ENCODE measurements at regions of chrX and their contacts with region 1.

Region 1: DNA sequence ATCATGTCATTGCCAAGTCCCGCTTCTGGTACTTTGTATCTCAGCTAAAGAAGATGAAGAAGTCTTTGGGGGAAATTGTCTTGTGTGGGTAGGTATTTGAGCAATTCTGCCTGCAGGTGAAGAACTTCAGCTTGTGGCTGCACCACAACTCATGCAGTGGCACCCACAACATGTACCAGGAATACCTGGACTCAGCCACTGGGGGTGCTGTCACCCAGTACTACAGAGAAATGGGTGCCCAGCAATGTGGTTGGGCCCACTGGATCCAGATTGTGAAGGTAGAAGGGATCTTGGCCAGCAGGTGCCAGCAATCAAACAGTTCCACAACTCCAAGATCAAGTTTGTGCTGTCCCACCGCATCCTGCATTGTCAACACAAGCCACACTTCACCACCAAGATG is 238.0 kb downstream of the IL1RAPL2 start:
- DNase-seq: no peak
- ATAC-seq: no peak
- H3K4me3 ChIP-seq: no peak overlapping the region
- H3K27ac ChIP-seq: no peak overlapping the region
- H3K4me1 ChIP-seq: no peaks in the 10 kb centered on the region
- H3K27me3 ChIP-seq: peaks cover 0 to 25% (median 0%) of the 10 kb centered on the region in 7 donors
- CTCF ChIP-seq: no peak

Region 2: DNA sequence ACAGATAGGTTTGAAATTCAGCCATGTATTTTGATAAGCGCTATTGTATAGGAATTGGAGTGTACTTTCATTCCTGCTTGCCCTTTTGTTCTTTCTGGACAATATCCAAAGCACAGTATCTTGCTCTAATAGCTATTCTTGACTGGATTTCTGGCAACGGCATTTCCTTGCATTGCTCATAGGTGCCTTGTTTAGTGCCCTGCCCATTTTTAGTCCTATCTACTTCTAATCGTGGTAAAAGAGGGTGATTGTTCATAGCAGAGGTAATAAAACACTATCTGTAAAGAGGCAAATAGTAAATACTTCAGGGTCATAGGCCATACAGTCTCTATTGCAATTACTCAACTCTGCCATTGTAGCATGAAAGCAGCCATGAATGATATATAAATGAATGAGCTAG is 82.2 kb before region 1 on chrX:
- intact Hi-C with region 1: no loop called
- DNase-seq: no peak
- ATAC-seq: no peak
- H3K4me3 ChIP-seq: no peak overlapping the region
- H3K27ac ChIP-seq: no peak overlapping the region
- H3K4me1 ChIP-seq: no peaks in the 10 kb centered on the region
- H3K27me3 ChIP-seq: no peaks in the 10 kb centered on the region
- CTCF ChIP-seq: no peak

Region 3: DNA sequence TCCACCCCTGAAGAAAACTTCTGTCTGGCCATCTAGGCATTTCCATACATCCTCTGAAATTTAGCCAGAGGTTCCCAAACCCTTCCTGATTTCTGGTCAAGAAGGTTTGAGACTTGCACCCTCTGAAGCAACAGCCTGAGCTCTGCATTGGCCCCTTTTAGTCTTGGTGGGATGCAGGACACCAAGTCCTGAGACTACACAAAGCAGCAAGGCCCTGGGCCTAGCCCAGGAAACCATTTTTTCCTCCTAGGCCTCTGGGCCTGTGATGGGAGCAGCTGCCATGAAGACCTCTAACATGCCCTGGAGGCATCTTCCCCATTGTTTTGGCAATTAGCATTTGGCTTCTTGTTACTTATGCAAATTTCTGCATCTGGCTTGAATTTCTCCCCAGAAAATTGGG is 41.4 kb before region 1 on chrX:
- intact Hi-C with region 1: no loop called
- DNase-seq: no peak
- ATAC-seq: no peak
- H3K4me3 ChIP-seq: no peak overlapping the region
- H3K27ac ChIP-seq: no peak overlapping the region
- H3K4me1 ChIP-seq: no peaks in the 10 kb centered on the region
- H3K27me3 ChIP-seq: peaks cover 0 to 5% (median 0%) of the 10 kb centered on the region in 7 donors
- CTCF ChIP-seq: no peak

Region 4: DNA sequence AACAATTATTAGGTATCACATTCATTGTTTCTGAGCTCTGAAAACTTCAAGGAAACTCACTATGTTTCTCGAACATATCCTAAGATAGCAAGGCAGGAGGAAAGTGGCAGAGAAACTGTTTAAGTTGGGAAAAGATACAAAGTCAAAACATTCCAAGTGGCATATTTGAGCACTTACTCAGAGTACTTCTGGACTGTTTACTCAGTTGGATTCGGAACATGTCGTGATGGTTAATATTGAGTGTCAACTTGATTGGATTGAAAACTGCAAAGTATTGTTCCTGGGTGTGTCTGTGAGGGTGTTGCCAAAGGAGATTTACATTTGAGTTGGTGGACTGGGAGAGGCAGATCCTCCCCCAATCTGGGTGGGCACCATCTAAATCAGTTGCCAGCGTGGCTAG is 60.3 kb after region 1 on chrX:
- intact Hi-C with region 1: loop called in 1 of 10 experiments (anchors 10 kb)
- DNase-seq: no peak
- ATAC-seq: no peak
- H3K4me3 ChIP-seq: no peak overlapping the region
- H3K27ac ChIP-seq: no peak overlapping the region
- H3K4me1 ChIP-seq: no peaks in the 10 kb centered on the region
- H3K27me3 ChIP-seq: peaks cover 0 to 18% (median 0%) of the 10 kb centered on the region in 7 donors
- CTCF ChIP-seq: no peak

Measured in heart right ventricle (tissue), 16 donors.